PC-3 (cell line): ENCODE measurements at regions of chr1 and their contacts with region 1.

Region 1: DNA sequence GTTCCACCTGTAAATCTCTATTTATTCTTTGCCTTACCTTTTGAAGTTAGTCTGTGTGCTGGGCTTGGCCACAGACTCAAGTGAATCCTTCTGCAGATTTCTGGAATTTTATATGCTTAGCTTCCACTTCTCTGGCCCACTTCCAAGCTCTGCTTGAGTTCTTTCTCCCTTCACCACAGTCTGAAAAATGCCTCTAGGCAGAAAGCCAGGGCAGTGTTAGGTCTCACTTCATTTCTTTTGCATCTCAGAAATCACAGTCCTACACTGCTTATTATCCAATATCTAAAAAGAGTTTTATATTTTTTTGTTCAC is 48.9 kb downstream of the INKA2 start:
- DNase-seq: peak; percentile 43
- ATAC-seq: peak; percentile 20
- H3K4me3 ChIP-seq: no peak overlapping the region
- H3K27ac ChIP-seq: no peak overlapping the region
- H3K4me1 ChIP-seq: no peaks in the 10 kb centered on the region
- H3K27me3 ChIP-seq: no peaks in the 10 kb centered on the region
- CTCF ChIP-seq: no peak

Region 2: GRCh38 chr1:111290630-111291029 is 399.6 kb before region 1 on chr1 and contains the start of gene CHIA:
- CTCF ChIA-PET with region 1: no interaction called
- POLR2A ChIA-PET with region 1: no interaction called
- intact Hi-C with region 1: no loop called
- DNase-seq: peak; percentile 65
- ATAC-seq: 0 out of 2 replicates have a peak, but pooled peaks have one; percentile 27
- H3K4me3 ChIP-seq: no peak within 1 kb of the TSS
- H3K27ac ChIP-seq: no peak within 1 kb of the TSS
- H3K4me1 ChIP-seq: no peaks in the 10 kb centered on the region
- H3K27me3 ChIP-seq: no peaks in the 10 kb centered on the region
- CTCF ChIP-seq: no peak
- total RNA-seq, gene CHIA: not detected in 2 replicates

Region 3: GRCh38 chr1:111553196-111553595 is 137.1 kb before region 1 on chr1:
- CTCF ChIA-PET with region 1: no interaction called
- POLR2A ChIA-PET with region 1: no interaction called
- intact Hi-C with region 1: no loop called
- DNase-seq: peak; percentile 78
- ATAC-seq: peak; percentile 80
- H3K4me3 ChIP-seq: no peak overlapping the region
- H3K27ac ChIP-seq: peak overlapping the region; percentile 50
- H3K4me1 ChIP-seq: peaks cover 14% of the 10 kb centered on the region
- H3K27me3 ChIP-seq: no peaks in the 10 kb centered on the region
- CTCF ChIP-seq: no peak

Region 4: GRCh38 chr1:111669268-111669667 is 21.0 kb before region 1 on chr1:
- CTCF ChIA-PET with region 1: interaction called, 11 read pairs
- POLR2A ChIA-PET with region 1: no interaction called
- intact Hi-C with region 1: no loop called
- DNase-seq: no peak
- ATAC-seq: no peak
- H3K4me3 ChIP-seq: no peak overlapping the region
- H3K27ac ChIP-seq: no peak overlapping the region
- H3K4me1 ChIP-seq: no peaks in the 10 kb centered on the region; the same call in 1 of the 2 replicates
- H3K27me3 ChIP-seq: no peaks in the 10 kb centered on the region
- CTCF ChIP-seq: no peak

Region 5: DNA sequence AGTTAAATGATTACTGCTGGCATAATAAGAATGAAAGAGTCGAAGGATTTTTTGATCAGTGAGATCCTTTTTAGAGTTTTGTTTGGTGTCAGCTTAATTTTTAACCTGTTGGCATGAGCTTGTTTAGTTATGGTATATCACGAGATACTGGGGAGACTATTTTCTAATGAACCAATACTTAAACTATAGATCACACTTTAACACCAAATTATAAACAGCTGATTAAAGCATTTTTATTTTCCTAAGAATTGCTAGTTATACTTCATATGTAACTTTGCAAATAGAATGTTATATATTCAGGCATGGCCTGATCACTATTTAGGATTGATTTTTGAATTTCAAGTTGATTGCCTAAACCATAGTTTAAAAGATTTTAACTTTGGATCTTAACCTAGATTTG is 71.5 kb after region 1 on chr1:
- CTCF ChIA-PET with region 1: no interaction called
- POLR2A ChIA-PET with region 1: interaction called, 21 read pairs
- intact Hi-C with region 1: no loop called
- DNase-seq: no peak
- ATAC-seq: no peak
- H3K4me3 ChIP-seq: no peak overlapping the region
- H3K27ac ChIP-seq: no peak overlapping the region
- H3K4me1 ChIP-seq: peaks cover 10% of the 10 kb centered on the region
- H3K27me3 ChIP-seq: no peaks in the 10 kb centered on the region
- CTCF ChIP-seq: no peak